CD8-positive, alpha-beta memory T cell (primary cell): ENCODE measurements at regions of chr2 and their contacts with region 1.

Region 1: DNA sequence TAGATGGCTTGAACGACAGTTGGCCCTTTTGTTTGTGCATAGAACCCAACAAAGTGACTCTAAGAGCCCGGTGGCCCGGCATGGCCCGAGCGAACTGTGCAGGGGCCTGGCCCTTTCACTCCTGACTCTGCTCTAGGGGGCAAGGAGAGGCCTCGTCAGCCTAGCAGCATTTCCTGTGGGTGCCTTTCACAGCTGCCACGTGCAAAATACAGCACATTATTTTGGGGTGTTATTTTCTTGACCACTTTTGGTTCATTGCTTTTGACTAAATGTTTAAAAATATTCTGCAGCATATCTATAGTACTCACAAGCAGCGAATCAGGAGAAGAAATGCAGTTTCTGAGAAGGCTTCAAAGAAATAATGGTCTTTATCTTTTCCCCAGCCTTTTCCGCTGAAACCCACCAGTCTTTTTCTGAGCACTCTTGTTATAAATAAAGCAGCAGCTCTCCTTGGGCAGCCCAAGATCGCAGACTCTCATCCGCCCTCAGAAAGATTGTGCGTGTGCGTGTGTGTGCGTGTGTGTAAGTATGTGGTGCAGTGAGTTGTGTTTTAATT is 31.3 kb downstream of the DGKD start:
- DNase-seq: peak; percentile 16 to 68 (median 48)
- H3K4me3 ChIP-seq: peak overlapping the region; percentile 15
- H3K4me3 Mint-ChIP-seq: peak overlapping the region; percentile 47 to 88 (median 73)
- H3K27ac ChIP-seq: no peak overlapping the region
- H3K27ac Mint-ChIP-seq: peak overlapping the region; percentile 80 to 94 (median 88)
- H3K4me1 ChIP-seq: peaks cover 65% of the 10 kb centered on the region
- H3K4me1 Mint-ChIP-seq: peaks cover 66 to 93% (median 86%) of the 10 kb centered on the region in 3 donors
- H3K27me3 ChIP-seq: no peaks in the 10 kb centered on the region
- H3K27me3 Mint-ChIP-seq: peaks cover 0 to 2% of the 10 kb centered on the region in 2 donors

Region 2: GRCh38 chr2:233312874-233313273 is 72.7 kb before region 1 on chr2:
- CTCF ChIA-PET with region 1: interaction called, 3 read pairs
- POLR2A ChIA-PET with region 1: interaction called, 10 read pairs
- DNase-seq: no peak
- H3K4me3 ChIP-seq: no peak overlapping the region
- H3K4me3 Mint-ChIP-seq: peak overlapping the region in 1 of 7 donors; percentile 61
- H3K27ac ChIP-seq: no peak overlapping the region
- H3K27ac Mint-ChIP-seq: peak overlapping the region in 3 of 8 donors; percentile 4 to 38 (median 33)
- H3K4me1 ChIP-seq: no peaks in the 10 kb centered on the region
- H3K4me1 Mint-ChIP-seq: peaks cover 5 to 10% (median 6%) of the 10 kb centered on the region in 3 donors
- H3K27me3 ChIP-seq: no peaks in the 10 kb centered on the region
- H3K27me3 Mint-ChIP-seq: no peaks in the 10 kb centered on the region

Region 3: DNA sequence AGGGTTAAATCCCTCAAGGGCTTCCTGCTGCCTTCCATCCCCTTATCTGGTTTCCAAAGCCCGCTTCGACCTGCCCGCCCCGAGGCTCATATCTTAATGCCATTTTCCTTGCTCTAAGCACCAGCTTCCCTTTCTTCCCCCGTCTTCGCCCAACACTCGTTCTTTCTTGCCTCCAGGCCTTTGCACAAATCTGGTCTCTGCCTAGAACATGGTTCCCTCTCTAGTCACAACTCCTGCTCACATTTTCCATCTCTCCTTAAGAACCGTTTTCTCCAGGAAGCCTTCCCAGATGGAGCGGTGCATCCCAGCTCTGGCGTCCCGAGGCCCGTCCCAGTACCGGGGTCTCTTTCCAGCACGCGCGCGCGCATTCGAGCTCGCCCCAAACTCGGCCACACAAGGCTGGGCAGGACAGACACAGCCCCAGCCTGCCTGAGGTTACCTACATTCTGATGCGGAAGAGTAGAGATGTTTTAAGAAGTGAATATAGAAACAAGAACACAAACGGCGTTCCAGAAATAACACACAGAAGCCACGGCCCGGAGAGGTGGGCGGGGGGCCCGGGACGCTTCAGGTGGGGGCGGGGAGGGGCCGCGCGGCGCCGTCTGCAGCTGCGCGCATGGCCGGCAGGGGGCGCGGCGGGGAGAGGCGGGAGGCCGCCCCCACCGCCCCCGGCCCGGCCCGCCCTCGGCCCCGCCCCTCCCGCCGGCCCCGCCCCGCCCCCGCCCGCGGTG is 31.6 kb before region 1 on chr2 and contains the start of gene DGKD:
- CTCF ChIA-PET with region 1: interaction called, 10 read pairs
- POLR2A ChIA-PET with region 1: no interaction called
- DNase-seq: peak; percentile 61 to 77 (median 70)
- H3K4me3 ChIP-seq: peak within 1 kb of the TSS; percentile 75
- H3K4me3 Mint-ChIP-seq: peak within 1 kb of the TSS; percentile 92 to 96 (median 94)
- H3K27ac ChIP-seq: no peak within 1 kb of the TSS
- H3K27ac Mint-ChIP-seq: peak within 1 kb of the TSS; percentile 78 to 99 (median 91)
- H3K4me1 ChIP-seq: peaks cover 47% of the 10 kb centered on the region
- H3K4me1 Mint-ChIP-seq: peaks cover 57 to 72% (median 60%) of the 10 kb centered on the region in 3 donors
- H3K27me3 ChIP-seq: no peaks in the 10 kb centered on the region
- H3K27me3 Mint-ChIP-seq: peaks cover 0 to 3% of the 10 kb centered on the region in 2 donors
- total RNA-seq, gene DGKD: 54.2 to 61.9 TPM